Left cardiac atrium (tissue), 4 donors: ENCODE measurements at regions of chr1 and their contacts with region 1.

Region 1: DNA sequence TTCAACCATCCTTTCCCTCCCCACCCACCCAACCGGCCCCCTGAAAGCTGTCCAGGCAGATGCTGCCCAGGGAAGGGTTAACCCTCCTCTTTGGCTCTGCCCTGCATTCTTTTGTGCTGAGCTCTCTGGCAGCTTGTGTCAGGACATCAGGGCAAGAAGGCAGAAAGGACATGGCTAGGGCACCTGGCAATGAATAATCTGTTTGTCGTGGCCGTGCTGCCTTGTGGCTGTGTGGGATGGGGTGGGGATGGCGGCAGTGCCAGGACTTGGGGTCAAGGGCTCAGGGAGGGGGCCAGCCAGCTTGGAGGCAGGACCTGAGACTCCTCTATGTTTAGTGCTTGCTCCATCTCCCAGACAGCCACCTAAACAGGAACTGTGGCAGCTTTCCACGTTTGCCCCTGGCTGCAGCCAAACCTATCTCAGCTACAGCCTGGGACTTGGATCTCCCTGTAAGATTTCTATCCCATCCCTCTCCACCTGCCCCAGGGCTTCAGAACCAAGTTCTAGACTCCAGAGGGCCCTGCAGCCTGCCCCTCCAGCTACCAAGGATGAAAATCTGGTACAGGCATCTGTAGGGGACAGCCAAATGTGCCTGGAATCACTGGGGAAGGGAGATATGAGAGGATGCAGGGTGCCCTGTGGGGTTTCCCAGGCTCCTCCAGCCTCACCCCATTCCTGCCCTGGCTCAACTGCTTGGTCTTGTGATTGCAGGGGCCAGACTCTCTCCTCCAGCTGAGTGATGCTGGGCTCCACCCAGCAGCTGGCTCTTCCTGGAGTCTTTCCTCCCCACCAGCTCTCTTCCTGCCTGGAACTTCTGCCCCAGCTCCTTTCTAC is 9.7 kb upstream of the GPR37L1 start:
- DNase-seq: peak; percentile 51
- ATAC-seq: peak; percentile 59 to 81

Region 2: GRCh38 chr1:202009326-202010179 is 103.5 kb before region 1 on chr1:
- intact Hi-C with region 1: loop called (anchors 2 kb)
- DNase-seq: peak; percentile 71
- ATAC-seq: peak; percentile 74 to 78